ENCODE measurements at regions of chr17 and their contacts with region 1.

Region 1: GRCh38 chr17:7048968-7049367 is 5.1 kb upstream of the SLC16A11 start:
- DNase-seq: no peak
- H3K4me3 ChIP-seq: no peak overlapping the region
- H3K27ac ChIP-seq: no peak overlapping the region
- H3K4me1 ChIP-seq: peaks cover 15 to 26% (median 20%) of the 10 kb centered on the region in 4 donors
- H3K27me3 ChIP-seq: peaks cover 0 to 16% (median 8%) of the 10 kb centered on the region in 4 donors
- CTCF ChIP-seq: no peak
- EP300 ChIP-seq: no peak
- POLR2A ChIP-seq: no peak

Region 2: GRCh38 chr17:6936370-6937028 is 112.5 kb before region 1 on chr17:
- intact Hi-C with region 1: no loop called
- DNase-seq: no peak
- H3K4me3 ChIP-seq: peak overlapping the region; percentile 43 to 63 (median 50)
- H3K27ac ChIP-seq: peak overlapping the region; percentile 43 to 62 (median 60)
- H3K4me1 ChIP-seq: peaks cover 0 to 5% (median 0%) of the 10 kb centered on the region in 4 donors
- H3K27me3 ChIP-seq: no peaks in the 10 kb centered on the region
- CTCF ChIP-seq: no peak
- EP300 ChIP-seq: no peak
- POLR2A ChIP-seq: no peak

Region 3: GRCh38 chr17:7177196-7177953 is 128.4 kb after region 1 on chr17:
- intact Hi-C with region 1: loop called (anchors 2 kb)
- DNase-seq: no peak
- H3K4me3 ChIP-seq: peak overlapping the region; percentile 35 to 55 (median 43)
- H3K27ac ChIP-seq: no peak overlapping the region
- H3K4me1 ChIP-seq: peaks cover 12 to 25% (median 23%) of the 10 kb centered on the region in 4 donors
- H3K27me3 ChIP-seq: peaks cover 0 to 66% (median 18%) of the 10 kb centered on the region in 4 donors
- CTCF ChIP-seq: peak; percentile 76 to 95 (median 83)
- EP300 ChIP-seq: no peak
- POLR2A ChIP-seq: no peak

Measured in esophagus muscularis mucosa (tissue), 4 donors.